Adrenal gland (tissue), 19 donors: ENCODE measurements at regions of chr3 and their contacts with region 1.

Region 1: DNA sequence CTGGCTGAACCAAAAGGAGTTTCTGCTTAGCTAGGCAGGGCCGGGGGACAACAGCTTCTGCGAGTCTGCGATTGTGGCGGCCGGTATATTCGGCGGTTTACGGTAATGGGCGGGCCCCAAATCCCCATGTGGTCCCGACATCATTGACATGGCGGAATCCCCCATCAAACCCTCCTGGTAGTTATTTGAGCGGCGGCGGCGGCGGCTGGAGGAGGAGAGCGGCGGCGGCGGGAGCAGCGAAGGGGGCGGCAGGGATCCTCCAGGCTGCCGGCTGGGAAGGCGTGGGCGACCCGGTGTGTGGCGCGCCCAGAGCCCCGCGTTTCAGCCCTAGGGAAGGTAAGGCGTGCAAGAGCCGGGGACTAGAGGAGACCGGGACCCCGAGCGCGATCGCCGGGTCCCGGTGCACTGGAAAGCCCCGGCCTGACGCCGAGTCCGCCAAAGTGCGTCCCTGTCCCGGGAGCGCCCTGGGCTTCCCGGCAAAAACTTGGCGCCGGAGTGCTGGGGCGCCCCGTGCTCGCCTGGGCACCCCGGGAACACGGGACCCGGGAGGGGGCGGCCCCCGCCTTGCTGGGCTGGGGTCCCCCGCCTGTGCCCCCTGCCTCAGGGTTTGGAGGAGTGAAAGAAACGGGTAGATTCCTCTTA is at the start of gene FNDC3B:
- DNase-seq: peak; percentile 93 to 98 (median 95)
- H3K4me3 ChIP-seq: peak within 1 kb of the TSS; percentile 30 to 97 (median 84)
- H3K27ac ChIP-seq: peak within 1 kb of the TSS; percentile 93 to 99 (median 98)
- H3K4me1 ChIP-seq: peaks cover 10 to 41% of the 10 kb centered on the region in 2 donors
- H3K27me3 ChIP-seq: no peaks in the 10 kb centered on the region
- CTCF ChIP-seq: no peak
- POLR2A ChIP-seq: peak; percentile 89 to 96
- total RNA-seq, gene FNDC3B: 66.6 to 228 (median 106) TPM

Region 2: DNA sequence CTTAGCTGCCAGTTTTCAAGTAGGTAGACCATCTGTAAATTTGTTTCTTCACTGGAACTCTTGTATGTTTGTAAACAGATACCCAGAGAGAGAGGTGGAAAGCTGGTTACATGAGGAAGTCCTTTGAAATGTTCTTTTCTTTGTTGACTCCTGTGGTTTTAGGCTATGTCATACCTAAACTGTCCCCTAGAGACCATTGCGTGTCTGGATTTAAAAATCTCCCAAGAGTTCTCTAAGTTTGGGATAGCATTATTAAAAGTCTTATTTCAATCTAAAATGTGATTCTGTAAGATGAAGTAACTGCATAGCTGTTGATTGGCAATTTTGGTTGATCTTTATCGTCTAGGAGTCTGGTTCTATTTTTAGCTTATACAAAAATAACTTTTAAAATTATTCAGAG is 281.5 kb after region 1 on chr3:
- intact Hi-C with region 1: loop called in 1 of 2 experiments (anchors 10 kb)
- DNase-seq: no peak
- H3K4me3 ChIP-seq: no peak overlapping the region
- H3K27ac ChIP-seq: peak overlapping the region in 1 of 5 donors; percentile 86
- H3K4me1 ChIP-seq: peaks cover 49 to 62% of the 10 kb centered on the region in 2 donors
- H3K27me3 ChIP-seq: no peaks in the 10 kb centered on the region
- CTCF ChIP-seq: peak in 3 of 6 experiments; percentile 19 to 27 (median 19)
- POLR2A ChIP-seq: no peak

Region 3: DNA sequence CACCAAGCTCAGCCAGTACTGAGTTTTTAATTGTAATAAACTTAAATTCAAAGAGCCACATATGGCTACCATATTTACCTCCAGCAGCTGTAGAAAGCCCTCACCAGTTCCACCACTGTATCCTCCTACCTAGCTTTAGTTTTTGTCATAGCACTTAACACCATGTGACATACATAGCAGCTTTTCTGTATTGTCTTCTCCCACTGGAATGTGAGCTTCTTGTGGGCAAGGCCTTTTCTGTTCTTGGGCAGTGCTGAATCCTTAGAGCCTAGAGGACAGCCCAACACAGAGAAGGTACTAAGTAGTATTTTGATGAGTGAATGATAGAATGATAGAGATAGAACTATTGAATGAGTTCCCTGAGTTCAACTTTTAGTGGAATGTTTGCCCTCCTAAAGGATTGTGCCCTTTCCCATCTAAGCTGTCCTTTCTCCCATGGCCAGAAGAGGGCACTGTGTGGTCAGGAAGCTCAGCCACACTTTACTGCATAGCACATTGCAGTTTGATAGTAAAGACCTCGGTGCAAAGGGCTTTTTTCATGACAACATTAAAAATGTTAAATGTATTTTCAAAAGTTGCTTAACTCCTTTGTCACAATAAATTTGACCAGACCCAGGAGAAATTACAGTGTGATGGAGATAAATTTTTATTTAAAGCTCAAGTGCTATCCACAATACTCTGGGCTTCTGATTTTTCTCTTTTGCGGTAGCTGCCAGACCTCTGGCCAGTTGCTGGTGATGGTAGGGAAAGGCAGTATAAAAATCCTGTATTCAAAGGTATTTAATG is 292.9 kb after region 1 on chr3:
- intact Hi-C with region 1: loop called (anchors 10 kb)
- DNase-seq: peak; percentile 57 to 86 (median 69)
- H3K4me3 ChIP-seq: no peak overlapping the region
- H3K27ac ChIP-seq: peak overlapping the region in 3 of 5 donors; percentile 17 to 56 (median 29)
- H3K4me1 ChIP-seq: peaks cover 0 to 10% of the 10 kb centered on the region in 2 donors
- H3K27me3 ChIP-seq: no peaks in the 10 kb centered on the region
- CTCF ChIP-seq: peak; percentile 83 to 90 (median 84)
- POLR2A ChIP-seq: no peak